ACHN (cell line): ENCODE measurements at regions of chr6 and their contacts with region 1.

Region 1: GRCh38 chr6:57316581-57317059 is 810 bp upstream of the PRIM2 start:
- DNase-seq: peak; percentile 91

Region 2: DNA sequence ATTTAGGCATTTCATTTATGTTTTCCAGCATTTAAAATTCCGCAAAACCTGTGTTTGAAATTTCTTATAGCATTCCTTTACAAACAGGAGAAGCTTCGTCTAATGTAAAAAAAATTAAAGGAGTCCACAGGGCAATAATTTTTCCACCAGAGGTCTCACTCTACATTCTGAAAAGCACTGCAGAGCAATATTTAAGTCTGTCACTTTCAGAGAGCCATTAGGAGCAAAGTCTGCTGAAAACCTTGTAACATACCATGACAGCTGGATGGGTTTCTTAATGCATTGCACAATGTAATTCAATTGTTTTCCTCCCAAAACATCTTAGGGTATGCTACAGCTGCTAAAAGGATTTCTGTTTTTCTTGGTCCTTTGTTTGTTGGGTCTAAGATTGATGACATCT is 126.5 kb before region 1 on chr6:
- in situ Hi-C with region 1: loop called (anchors 25 kb)
- DNase-seq: peak; percentile 36

Region 3: GRCh38 chr6:57205550-57206328 is 110.9 kb before region 1 on chr6:
- in situ Hi-C with region 1: no loop called
- DNase-seq: no peak